Activated T-helper 2 cell treated with anti-CD3 and anti-CD28 coated beads, Interferon-gamma antibody, Interleukin-2, Interleukin-4, amounts not matched to agents 10 μg/mL and 5 μg/mL and 100 μg/mL, durations not matched to agents 14 hours and 24 hours and 36 hours (primary cell): ENCODE measurements at regions of chr1 and their contacts with region 1.

Region 1: DNA sequence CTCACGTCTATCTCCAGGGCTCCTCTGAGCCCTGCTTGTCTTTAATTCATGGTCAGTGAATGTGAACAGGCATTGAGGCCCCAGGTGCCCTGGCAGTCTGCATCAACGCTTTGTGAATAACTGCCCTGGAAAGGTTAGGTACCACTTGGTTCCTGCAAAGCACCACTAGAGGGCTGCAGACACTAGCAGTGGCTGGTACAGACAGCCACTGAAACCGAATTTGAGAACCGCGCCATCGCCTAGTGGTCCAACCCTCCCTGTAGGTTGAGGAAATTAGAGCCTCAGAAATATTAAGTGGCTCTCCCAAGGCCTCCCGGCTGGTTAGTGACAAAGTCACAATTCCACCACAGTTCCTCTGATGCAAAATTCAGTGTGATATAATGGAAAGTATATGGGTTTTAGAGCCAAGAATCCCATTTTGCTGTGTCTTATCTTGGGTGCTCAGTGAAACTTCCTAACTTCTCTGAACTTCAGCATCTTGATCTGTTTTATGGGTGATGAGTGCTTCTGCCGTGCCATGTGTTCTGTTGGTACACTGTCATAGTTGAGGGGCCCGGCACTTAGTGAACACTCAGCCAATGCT is 46.2 kb upstream of the BCL9 start:
- DNase-seq: peak; percentile 57
- H3K4me3 Mint-ChIP-seq: no peak overlapping the region
- H3K27ac Mint-ChIP-seq: no peak overlapping the region
- H3K4me1 Mint-ChIP-seq: no peaks in the 10 kb centered on the region
- H3K27me3 Mint-ChIP-seq: peaks cover 11% of the 10 kb centered on the region

Region 2: GRCh38 chr1:147618077-147618569 is 123.0 kb after region 1 on chr1:
- intact Hi-C with region 1: loop called (anchors 2 kb)
- DNase-seq: peak; percentile 74
- H3K4me3 Mint-ChIP-seq: peak overlapping the region; percentile 48
- H3K27ac Mint-ChIP-seq: peak overlapping the region; percentile 85
- H3K4me1 Mint-ChIP-seq: peaks cover 43% of the 10 kb centered on the region
- H3K27me3 Mint-ChIP-seq: no peaks in the 10 kb centered on the region

Region 3: DNA sequence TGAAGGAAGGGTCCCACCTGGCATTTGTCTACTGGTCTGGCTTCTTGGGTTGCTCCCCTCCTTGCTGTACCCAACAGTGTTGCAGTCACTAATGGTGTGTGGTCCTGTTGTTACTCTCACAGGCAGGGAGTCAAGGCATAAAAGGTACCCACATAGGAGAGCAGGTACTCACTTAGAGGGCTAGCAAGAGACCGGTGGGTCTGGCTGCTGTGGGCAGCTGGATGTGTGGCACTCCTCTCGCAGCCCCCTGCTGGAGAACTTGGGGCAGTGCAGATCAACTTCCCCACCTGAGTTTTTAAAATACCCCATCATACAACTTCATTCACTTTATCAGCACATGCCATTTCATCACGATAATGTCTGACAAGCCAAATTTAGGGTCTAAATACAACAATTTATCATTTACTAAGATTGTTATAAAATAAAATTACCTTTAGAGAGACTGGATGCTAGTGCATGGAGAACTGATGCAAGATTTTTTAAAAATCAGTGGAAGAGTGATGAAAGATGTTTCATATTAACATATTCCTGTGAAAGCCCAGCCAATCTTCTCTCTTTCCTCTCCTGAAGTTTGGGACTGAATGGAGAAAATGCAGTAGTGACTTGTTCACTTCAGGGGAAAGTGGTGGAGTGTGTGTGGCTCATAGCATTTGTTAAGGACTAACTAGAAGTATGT is 132.5 kb after region 1 on chr1:
- intact Hi-C with region 1: loop called (anchors 1 kb)
- DNase-seq: peak; percentile 37
- H3K4me3 Mint-ChIP-seq: no peak overlapping the region
- H3K27ac Mint-ChIP-seq: no peak overlapping the region
- H3K4me1 Mint-ChIP-seq: peaks cover 30% of the 10 kb centered on the region
- H3K27me3 Mint-ChIP-seq: no peaks in the 10 kb centered on the region

Region 4: GRCh38 chr1:147640553-147641165 is 145.6 kb after region 1 on chr1:
- intact Hi-C with region 1: loop called (anchors 1 kb)
- DNase-seq: peak; percentile 68
- H3K4me3 Mint-ChIP-seq: no peak overlapping the region
- H3K27ac Mint-ChIP-seq: peak overlapping the region; percentile 15
- H3K4me1 Mint-ChIP-seq: peaks cover 45% of the 10 kb centered on the region
- H3K27me3 Mint-ChIP-seq: no peaks in the 10 kb centered on the region

Region 5: GRCh38 chr1:147700042-147701006 is 205.2 kb after region 1 on chr1:
- intact Hi-C with region 1: loop called (anchors 5 kb)
- DNase-seq: peak; percentile 46
- H3K4me3 Mint-ChIP-seq: no peak overlapping the region
- H3K27ac Mint-ChIP-seq: no peak overlapping the region
- H3K4me1 Mint-ChIP-seq: peaks cover 5% of the 10 kb centered on the region
- H3K27me3 Mint-ChIP-seq: peaks cover 34% of the 10 kb centered on the region